Common myeloid progenitor, CD34-positive (primary cell): ENCODE measurements at regions of chr1 and their contacts with region 1.

Region 1: GRCh38 chr1:179002552-179003345 is 22.9 kb upstream of the FAM20B start:
- DNase-seq: peak; percentile 71 to 75 (median 73)
- H3K4me3 ChIP-seq: peak overlapping the region in 2 of 7 experiments; percentile 16 to 59
- H3K27ac ChIP-seq: no peak overlapping the region
- H3K4me1 ChIP-seq: peaks cover 0 to 5% (median 0%) of the 10 kb centered on the region in 4 experiments
- H3K27me3 ChIP-seq: no peaks in the 10 kb centered on the region

Region 2: GRCh38 chr1:178310685-178311105 is 692.1 kb before region 1 on chr1:
- CTCF ChIA-PET with region 1: interaction called, 15 read pairs
- POLR2A ChIA-PET with region 1: no interaction called
- DNase-seq: peak; percentile 68 to 82 (median 75)
- H3K4me3 ChIP-seq: no peak overlapping the region
- H3K27ac ChIP-seq: no peak overlapping the region
- H3K4me1 ChIP-seq: peaks cover 0 to 7% (median 0%) of the 10 kb centered on the region in 4 experiments
- H3K27me3 ChIP-seq: no peaks in the 10 kb centered on the region

Region 3: DNA sequence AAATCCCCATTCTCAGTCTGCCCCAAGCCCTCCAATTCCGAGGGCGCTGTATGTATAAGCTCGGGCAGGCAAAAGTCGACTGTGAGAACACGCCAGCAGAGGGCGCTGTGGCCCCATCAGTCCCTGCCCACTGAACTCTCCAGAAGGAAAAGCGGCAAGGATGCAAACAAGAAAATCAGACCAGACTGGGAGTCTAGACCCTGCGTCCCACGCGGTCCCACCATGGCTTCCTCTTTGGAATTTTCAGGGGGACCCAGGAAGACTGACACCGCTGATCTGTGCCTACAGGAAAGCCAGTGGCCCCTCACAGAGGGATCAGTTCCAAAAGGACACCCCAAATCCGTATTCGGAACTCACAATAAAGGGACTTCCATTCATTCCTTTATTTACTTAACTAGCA is 470.4 kb before region 1 on chr1:
- CTCF ChIA-PET with region 1: interaction called, 37 read pairs
- POLR2A ChIA-PET with region 1: no interaction called
- DNase-seq: peak; percentile 69 to 82 (median 74)
- H3K4me3 ChIP-seq: peak overlapping the region in 1 of 7 experiments; percentile 5
- H3K27ac ChIP-seq: no peak overlapping the region
- H3K4me1 ChIP-seq: peaks cover 0 to 7% (median 3%) of the 10 kb centered on the region in 4 experiments
- H3K27me3 ChIP-seq: no peaks in the 10 kb centered on the region

Region 4: GRCh38 chr1:178542560-178543356 is 460.0 kb before region 1 on chr1:
- CTCF ChIA-PET with region 1: interaction called, 28 read pairs
- POLR2A ChIA-PET with region 1: no interaction called
- DNase-seq: peak; percentile 81 to 90 (median 85)
- H3K4me3 ChIP-seq: peak overlapping the region; percentile 75 to 98 (median 93)
- H3K27ac ChIP-seq: peak overlapping the region in 1 of 2 experiments; percentile 79
- H3K4me1 ChIP-seq: peaks cover 0 to 15% (median 12%) of the 10 kb centered on the region in 4 experiments
- H3K27me3 ChIP-seq: no peaks in the 10 kb centered on the region

Region 5: DNA sequence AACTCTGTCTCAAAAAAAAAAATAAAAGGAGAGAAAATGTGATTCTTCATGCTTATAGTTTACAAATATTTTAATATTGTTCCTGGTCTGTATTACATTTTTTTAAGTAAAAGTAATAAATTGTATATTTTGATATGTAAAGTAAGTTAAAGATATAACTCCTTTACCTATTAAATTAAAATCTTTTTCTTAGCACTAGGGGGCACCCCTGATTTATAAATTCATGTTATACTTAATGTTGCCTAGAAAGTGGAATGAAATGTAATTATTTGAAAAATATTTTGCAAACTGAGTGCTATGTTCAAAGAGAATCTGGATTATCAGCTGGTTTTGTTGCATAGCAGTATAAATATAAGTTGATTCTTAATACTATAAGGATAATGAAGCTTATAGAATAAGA is 228.5 kb before region 1 on chr1:
- CTCF ChIA-PET with region 1: interaction called, 46 read pairs
- POLR2A ChIA-PET with region 1: no interaction called
- DNase-seq: peak; percentile 23 to 62 (median 57)
- H3K4me3 ChIP-seq: no peak overlapping the region
- H3K27ac ChIP-seq: no peak overlapping the region
- H3K4me1 ChIP-seq: no peaks in the 10 kb centered on the region
- H3K27me3 ChIP-seq: no peaks in the 10 kb centered on the region

Region 6: GRCh38 chr1:179016747-179017549 is 14.2 kb after region 1 on chr1:
- CTCF ChIA-PET with region 1: interaction called, 50 read pairs
- POLR2A ChIA-PET with region 1: no interaction called
- DNase-seq: peak; percentile 69 to 77 (median 71)
- H3K4me3 ChIP-seq: peak overlapping the region in 3 of 7 experiments; percentile 35 to 54 (median 36)
- H3K27ac ChIP-seq: peak overlapping the region in 1 of 2 experiments; percentile 73
- H3K4me1 ChIP-seq: peaks cover 0 to 17% (median 12%) of the 10 kb centered on the region in 4 experiments
- H3K27me3 ChIP-seq: no peaks in the 10 kb centered on the region